ENCODE measurements at regions of chr1 and their contacts with region 1.

Region 1: GRCh38 chr1:84433258-84434080 is 35.2 kb downstream of the DNASE2B start:
- DNase-seq: peak; percentile 69
- H3K4me3 ChIP-seq: peak overlapping the region in 3 of 4 donors; percentile 1 to 42 (median 24)
- H3K27ac ChIP-seq: peak overlapping the region; percentile 39 to 79 (median 58)
- H3K4me1 ChIP-seq: peaks cover 0 to 29% (median 6%) of the 10 kb centered on the region in 4 donors
- H3K27me3 ChIP-seq: no peaks in the 10 kb centered on the region
- CTCF ChIP-seq: peak; percentile 66 to 96 (median 79)
- EP300 ChIP-seq: no peak
- POLR2A ChIP-seq: no peak

Region 2: GRCh38 chr1:83931658-83932253 is 501.7 kb before region 1 on chr1:
- in situ Hi-C with region 1: loop called in 2 of 4 experiments (anchors 25 kb)
- intact Hi-C with region 1: loop called (anchors 2 kb)
- DNase-seq: no peak
- H3K4me3 ChIP-seq: no peak overlapping the region
- H3K27ac ChIP-seq: no peak overlapping the region
- H3K4me1 ChIP-seq: peaks cover 0 to 8% (median 3%) of the 10 kb centered on the region in 4 donors
- H3K27me3 ChIP-seq: no peaks in the 10 kb centered on the region
- CTCF ChIP-seq: peak; percentile 63 to 77 (median 74)
- EP300 ChIP-seq: no peak
- POLR2A ChIP-seq: no peak

Region 3: DNA sequence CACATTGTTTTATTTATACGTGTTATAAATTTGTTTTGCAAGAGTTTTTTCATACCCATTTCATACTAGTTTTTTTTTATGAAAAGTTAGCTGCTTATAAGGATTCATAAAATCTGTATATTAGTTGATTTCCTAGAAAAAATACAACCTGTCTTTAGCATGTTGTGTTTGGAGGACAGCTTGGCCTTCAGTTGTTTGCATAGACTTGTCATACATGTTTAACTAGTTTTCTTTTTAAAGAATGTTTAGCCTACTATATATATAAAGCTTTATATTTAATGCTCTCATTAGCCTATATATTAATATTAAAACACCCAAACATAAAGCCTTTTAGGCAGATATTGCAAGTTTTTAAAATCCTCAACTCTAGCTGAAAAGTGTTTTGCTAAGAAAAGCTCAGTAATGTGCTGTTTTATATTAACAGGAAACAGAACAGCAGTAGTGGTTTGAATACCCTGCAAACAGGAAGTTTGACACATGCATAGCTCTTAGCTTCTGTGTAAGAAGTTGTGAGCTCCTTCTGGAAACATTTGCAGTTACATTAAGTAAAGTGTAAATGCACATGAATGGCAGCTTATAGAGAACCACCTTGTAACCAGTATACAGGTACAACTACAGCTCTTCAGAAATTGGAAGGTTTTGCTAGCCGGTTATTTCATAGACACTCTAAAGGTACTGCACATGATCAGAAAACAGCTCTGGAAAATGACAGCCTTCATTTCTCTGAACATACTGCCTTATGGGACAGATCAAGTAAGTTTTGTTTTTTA is 289.5 kb before region 1 on chr1 and contains the start of gene PRKACB:
- in situ Hi-C with region 1: loop called (anchors 5 to 10 kb)
- intact Hi-C with region 1: loop called (anchors 10 kb)
- DNase-seq: no peak
- H3K4me3 ChIP-seq: peak within 1 kb of the TSS in 3 of 4 donors; percentile 20 to 45 (median 30)
- H3K27ac ChIP-seq: peak within 1 kb of the TSS; percentile 71 to 85 (median 80)
- H3K4me1 ChIP-seq: peaks cover 0 to 41% (median 4%) of the 10 kb centered on the region in 4 donors
- H3K27me3 ChIP-seq: no peaks in the 10 kb centered on the region
- CTCF ChIP-seq: no peak
- EP300 ChIP-seq: no peak
- POLR2A ChIP-seq: peak; percentile 76
- total RNA-seq, gene PRKACB: 34.6 to 115 (median 79.2) TPM

Region 4: GRCh38 chr1:84377480-84378095 is 55.9 kb before region 1 on chr1:
- in situ Hi-C with region 1: no loop called
- intact Hi-C with region 1: no loop called
- DNase-seq: no peak
- H3K4me3 ChIP-seq: no peak overlapping the region
- H3K27ac ChIP-seq: no peak overlapping the region
- H3K4me1 ChIP-seq: peaks cover 0 to 4% (median 0%) of the 10 kb centered on the region in 4 donors
- H3K27me3 ChIP-seq: no peaks in the 10 kb centered on the region
- CTCF ChIP-seq: no peak
- EP300 ChIP-seq: no peak
- POLR2A ChIP-seq: no peak

Region 5: GRCh38 chr1:84620720-84621313 is 187.3 kb after region 1 on chr1:
- in situ Hi-C with region 1: loop called in 1 of 4 experiments (anchors 25 kb)
- intact Hi-C with region 1: no loop called
- DNase-seq: peak; percentile 81
- H3K4me3 ChIP-seq: peak overlapping the region; percentile 46 to 78 (median 52)
- H3K27ac ChIP-seq: peak overlapping the region; percentile 69 to 81 (median 74)
- H3K4me1 ChIP-seq: peaks cover 0 to 18% (median 7%) of the 10 kb centered on the region in 4 donors
- H3K27me3 ChIP-seq: no peaks in the 10 kb centered on the region
- CTCF ChIP-seq: peak; percentile 90 to 99 (median 98)
- EP300 ChIP-seq: no peak
- POLR2A ChIP-seq: no peak

Region 6: DNA sequence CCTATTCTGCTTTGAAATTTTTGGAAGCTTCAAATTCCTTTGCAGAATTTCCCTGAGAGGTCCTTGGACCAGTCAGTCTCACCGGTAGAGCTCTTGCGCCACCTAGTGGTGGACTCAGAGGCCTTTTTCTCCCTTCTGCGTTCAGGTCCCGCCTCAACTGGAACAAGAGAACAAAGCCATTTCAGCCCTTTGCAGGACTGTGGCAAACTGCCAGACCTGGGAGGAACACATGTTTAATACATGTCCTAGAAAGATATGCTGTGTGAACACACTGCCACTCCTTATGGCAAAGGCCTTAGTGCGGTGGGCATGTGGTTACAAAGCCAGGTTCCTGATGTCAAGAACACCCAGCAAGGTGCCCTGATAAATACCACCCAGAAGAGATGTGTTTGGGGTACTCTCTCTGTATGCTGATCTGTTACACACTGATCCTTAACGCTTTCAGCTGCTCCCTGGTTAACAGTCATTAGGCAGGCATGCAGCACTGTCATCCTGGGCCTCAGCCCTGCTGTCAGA is 339.0 kb after region 1 on chr1:
- in situ Hi-C with region 1: loop called in 1 of 4 experiments (anchors 10 kb)
- intact Hi-C with region 1: no loop called
- DNase-seq: peak; percentile 86
- H3K4me3 ChIP-seq: no peak overlapping the region
- H3K27ac ChIP-seq: no peak overlapping the region
- H3K4me1 ChIP-seq: no peaks in the 10 kb centered on the region
- H3K27me3 ChIP-seq: no peaks in the 10 kb centered on the region
- CTCF ChIP-seq: peak; percentile 80 to 96 (median 90)
- EP300 ChIP-seq: no peak
- POLR2A ChIP-seq: no peak

Measured in transverse colon (tissue), 4 donors.